ENCODE measurements at regions of chr21 and their contacts with region 1.

Region 1: DNA sequence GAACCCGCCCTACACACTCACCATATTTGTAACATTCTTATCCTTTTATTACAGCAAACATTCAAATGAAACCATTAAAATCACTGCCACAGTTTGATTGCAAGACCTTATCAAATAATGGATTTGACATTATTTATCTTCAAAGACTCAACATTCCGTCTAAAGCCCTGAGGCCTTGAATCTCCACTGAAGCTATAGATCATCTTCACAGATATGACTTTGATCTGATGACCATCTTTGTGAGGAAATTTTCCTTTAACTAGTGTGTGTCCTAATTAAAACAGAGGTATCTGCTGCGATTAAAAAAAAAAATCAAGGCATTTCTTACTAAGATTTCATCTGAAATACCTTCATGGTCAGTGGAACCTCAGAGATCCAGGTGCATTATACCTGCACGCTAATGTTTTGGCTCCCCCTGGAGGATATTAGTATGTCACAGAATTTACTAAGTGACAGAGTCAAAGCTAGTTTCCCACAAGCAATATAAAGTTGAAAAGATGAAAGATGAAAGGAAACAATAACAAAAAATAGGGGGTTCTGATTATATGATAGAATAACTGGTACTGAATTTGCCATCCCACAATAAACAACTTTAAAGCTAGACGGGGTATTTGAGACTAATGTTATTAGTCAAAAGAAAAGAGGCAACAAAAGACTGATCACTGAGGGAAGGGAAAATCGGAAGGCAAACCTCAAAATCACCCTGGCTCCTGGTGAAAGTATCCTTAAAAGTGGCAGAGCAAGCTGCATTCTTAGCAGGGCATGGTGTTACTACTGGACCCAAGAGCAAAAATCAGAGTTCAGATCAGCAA is 923.4 kb downstream of the NCAM2 start:
- DNase-seq: peak; percentile 11
- ATAC-seq: peak; percentile 46; the same call in 1 of the 2 replicates
- H3K4me3 ChIP-seq: no peak overlapping the region
- H3K27ac ChIP-seq: no peak overlapping the region
- H3K4me1 ChIP-seq: no peaks in the 10 kb centered on the region
- H3K27me3 ChIP-seq: no peaks in the 10 kb centered on the region
- CTCF ChIP-seq: peak; percentile 53
- POLR2A ChIP-seq: no peak
- RAD21 ChIP-seq: peak; percentile 72

Region 2: GRCh38 chr21:21907271-21907670 is 14.4 kb before region 1 on chr21:
- CTCF ChIA-PET with region 1: interaction called, 10 read pairs
- POLR2A ChIA-PET with region 1: no interaction called
- dilution Hi-C with region 1: no loop called
- in situ Hi-C with region 1: no loop called
- intact Hi-C with region 1: no loop called
- DNase-seq: no peak
- ATAC-seq: peak; percentile 29; the same call in 1 of the 2 replicates
- H3K4me3 ChIP-seq: no peak overlapping the region
- H3K27ac ChIP-seq: no peak overlapping the region
- H3K4me1 ChIP-seq: no peaks in the 10 kb centered on the region
- H3K27me3 ChIP-seq: no peaks in the 10 kb centered on the region
- CTCF ChIP-seq: no peak
- POLR2A ChIP-seq: no peak
- RAD21 ChIP-seq: no peak

Region 3: DNA sequence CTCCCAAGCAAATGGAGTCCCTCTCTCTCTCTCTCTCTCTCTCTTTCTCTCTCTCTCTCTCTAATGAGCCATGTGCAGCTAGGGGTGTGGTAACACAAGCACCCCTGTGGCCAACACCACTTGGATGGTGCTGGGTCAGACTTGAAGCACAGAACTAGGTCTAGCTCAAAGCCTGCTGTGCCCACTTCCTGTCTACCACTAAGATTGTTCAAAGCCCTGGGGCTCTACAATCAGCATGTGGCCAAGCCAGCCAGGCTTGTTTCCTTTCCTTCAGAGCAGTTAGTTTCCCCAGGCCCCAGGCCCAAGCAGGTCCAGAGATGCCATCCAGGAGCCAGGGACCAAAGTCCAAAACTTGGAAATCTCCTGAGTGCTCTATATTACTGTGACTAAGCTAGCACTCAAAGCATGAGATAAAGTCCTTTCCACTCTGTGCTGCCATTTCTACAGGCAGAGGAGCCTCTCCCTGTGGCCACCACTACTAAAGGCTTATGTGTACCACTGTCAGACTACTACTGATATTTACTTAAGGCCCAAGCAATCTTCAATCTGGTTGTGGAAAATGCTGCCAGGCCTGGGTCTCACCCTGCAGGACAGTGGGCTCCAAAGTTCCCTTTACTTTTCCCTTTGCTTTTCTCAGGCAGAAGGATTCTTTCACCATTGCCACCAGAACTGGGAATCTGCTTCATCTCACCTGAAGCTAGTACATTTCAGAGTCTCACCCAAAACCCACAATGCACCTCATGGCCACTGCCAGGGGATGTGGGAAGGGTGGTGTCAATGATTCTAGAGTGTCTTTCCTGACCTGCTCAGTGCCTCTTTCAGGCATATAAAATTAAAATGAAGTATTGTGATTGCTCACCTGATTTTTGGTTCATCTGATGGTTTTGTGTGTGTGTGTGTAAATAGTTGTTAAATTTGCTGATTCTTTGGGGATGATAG is 76.0 kb after region 1 on chr21:
- CTCF ChIA-PET with region 1: no interaction called
- POLR2A ChIA-PET with region 1: no interaction called
- dilution Hi-C with region 1: no loop called
- in situ Hi-C with region 1: no loop called
- intact Hi-C with region 1: no loop called
- DNase-seq: no peak
- ATAC-seq: no peak
- H3K4me3 ChIP-seq: no peak overlapping the region
- H3K27ac ChIP-seq: no peak overlapping the region
- H3K4me1 ChIP-seq: no peaks in the 10 kb centered on the region
- H3K27me3 ChIP-seq: no peaks in the 10 kb centered on the region
- CTCF ChIP-seq: no peak
- POLR2A ChIP-seq: no peak
- RAD21 ChIP-seq: no peak

Measured in IMR-90 (cell line).